Activated naive CD4-positive, alpha-beta T cell treated with anti-CD3 and anti-CD28 coated beads for 36 hours (primary cell): ENCODE measurements at regions of chr10 and their contacts with region 1.

Region 1: DNA sequence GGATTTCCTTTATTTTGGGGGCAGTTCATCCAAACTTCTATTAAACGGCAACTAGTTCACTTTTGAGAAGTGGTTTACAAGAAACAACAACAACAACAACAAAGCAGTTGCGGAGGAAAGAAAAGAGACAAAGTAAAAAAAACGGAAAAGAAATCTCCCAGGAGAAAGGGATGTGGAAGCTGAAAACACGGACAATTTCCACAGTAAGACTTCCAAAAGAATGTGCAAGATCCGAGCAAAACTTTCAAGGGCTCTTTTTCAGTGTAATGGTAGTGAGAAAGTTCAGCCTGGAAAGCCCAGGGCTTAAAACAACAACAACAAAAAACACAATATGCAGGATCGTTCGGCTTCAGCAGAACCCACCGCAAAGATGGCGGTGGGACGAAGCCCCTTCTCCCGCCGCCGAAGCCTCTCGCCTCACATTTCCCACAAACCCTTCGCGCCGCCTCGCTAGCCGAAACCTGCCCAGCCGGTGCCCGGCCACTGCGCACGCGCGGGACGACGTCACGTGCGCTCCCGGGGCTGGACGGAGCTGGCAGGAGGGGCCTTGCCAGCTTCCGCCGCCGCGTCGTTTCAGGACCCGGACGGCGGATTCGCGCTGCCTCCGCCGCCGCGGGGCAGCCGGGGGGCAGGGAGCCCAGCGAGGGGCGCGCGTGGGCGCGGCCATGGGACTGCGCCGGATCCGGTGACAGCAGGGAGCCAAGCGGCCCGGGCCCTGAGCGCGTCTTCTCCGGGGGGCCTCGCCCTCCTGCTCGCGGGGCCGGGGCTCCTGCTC is at the start of gene TNKS2:
- DNase-seq: peak; percentile 94
- H3K4me3 Mint-ChIP-seq: peak within 1 kb of the TSS; percentile 98
- H3K27ac Mint-ChIP-seq: peak within 1 kb of the TSS; percentile 99
- H3K4me1 Mint-ChIP-seq: peaks cover 47% of the 10 kb centered on the region
- H3K27me3 Mint-ChIP-seq: no peaks in the 10 kb centered on the region
- total RNA-seq, gene TNKS2: 39.3 to 40.0 TPM

Region 2: GRCh38 chr10:91163269-91163868 is 634.7 kb before region 1 on chr10:
- CTCF ChIA-PET with region 1: no interaction called
- intact Hi-C with region 1: loop called (anchors 2 kb)
- DNase-seq: peak; percentile 75
- H3K4me3 Mint-ChIP-seq: peak overlapping the region; percentile 80
- H3K27ac Mint-ChIP-seq: peak overlapping the region; percentile 78
- H3K4me1 Mint-ChIP-seq: peaks cover 33% of the 10 kb centered on the region
- H3K27me3 Mint-ChIP-seq: no peaks in the 10 kb centered on the region

Region 3: DNA sequence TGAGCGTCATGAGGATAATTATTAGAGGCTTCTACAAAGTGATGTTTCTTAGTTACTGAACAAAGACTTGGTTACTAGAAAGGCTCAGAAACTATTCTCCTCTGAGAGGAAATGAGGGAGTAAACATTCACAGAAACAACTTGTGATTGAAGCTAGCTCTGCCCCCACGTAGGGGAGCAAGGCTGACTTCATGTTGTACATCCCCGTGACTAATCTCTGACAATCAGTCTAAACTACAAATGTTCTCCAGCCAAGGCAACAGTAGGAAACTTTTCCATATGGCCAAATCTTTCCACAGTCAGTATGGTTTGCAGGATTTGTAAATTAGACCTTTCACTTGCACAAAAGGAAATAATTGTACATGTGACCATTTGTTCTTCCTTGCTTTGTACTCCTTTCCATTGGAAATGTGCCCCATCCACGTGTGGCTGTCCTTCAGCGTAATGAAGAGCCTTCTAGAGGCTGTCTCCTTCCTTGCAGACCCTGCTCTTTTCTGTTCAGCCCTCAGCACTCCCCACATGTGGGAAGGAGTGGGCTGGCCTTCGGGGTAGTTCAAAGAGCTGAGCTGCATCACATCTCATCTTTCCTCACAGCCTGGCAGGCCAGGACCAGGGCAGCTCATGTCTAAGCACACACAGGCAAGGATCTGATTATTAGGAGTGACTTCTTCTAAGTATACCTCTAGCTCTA is 484.1 kb before region 1 on chr10:
- CTCF ChIA-PET with region 1: no interaction called
- intact Hi-C with region 1: loop called (anchors 2 kb)
- DNase-seq: peak; percentile 50
- H3K4me3 Mint-ChIP-seq: no peak overlapping the region
- H3K27ac Mint-ChIP-seq: peak overlapping the region; percentile 82
- H3K4me1 Mint-ChIP-seq: peaks cover 11% of the 10 kb centered on the region
- H3K27me3 Mint-ChIP-seq: peaks cover 4% of the 10 kb centered on the region

Region 4: GRCh38 chr10:91901784-91902677 is 104.0 kb after region 1 on chr10:
- CTCF ChIA-PET with region 1: no interaction called
- intact Hi-C with region 1: loop called (anchors 1 kb)
- DNase-seq: peak; percentile 85
- H3K4me3 Mint-ChIP-seq: no peak overlapping the region
- H3K27ac Mint-ChIP-seq: peak overlapping the region; percentile 79
- H3K4me1 Mint-ChIP-seq: peaks cover 23% of the 10 kb centered on the region
- H3K27me3 Mint-ChIP-seq: no peaks in the 10 kb centered on the region

Region 5: DNA sequence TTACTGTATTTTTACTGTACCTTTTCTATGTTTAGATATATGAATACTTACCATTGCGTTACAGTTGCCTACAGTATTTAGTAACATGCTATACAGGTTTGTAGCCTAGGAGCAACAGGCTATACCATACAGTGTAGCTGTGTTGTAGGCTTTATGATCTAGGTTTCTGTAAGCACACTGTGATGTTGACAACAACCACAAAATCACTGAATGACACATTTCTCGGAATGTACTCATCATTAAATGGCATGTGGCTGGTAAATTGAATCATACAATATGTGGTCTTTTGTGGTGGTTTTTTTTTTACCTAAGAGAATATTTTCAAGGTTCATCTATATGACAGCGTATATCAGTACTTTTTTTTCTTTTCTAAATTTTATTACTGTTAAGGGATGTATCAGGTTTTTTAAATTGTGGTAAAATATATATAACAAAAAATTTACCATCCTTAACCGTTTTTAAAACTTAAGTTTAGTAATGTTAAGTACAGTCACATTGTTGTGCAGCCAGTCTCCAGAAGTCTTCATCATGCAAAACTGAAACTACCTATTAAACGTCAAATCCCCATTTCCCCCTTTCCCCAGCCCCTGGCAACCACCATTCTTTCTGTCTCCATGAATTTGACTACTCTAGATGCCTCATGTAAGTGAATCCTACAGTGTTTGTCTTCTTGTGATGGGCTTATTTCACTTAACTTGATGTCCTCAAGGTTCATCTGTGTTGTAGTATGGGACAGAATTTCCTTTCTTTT is 147.0 kb after region 1 on chr10:
- CTCF ChIA-PET with region 1: no interaction called
- intact Hi-C with region 1: loop called (anchors 1 kb)
- DNase-seq: peak; percentile 34
- H3K4me3 Mint-ChIP-seq: no peak overlapping the region
- H3K27ac Mint-ChIP-seq: no peak overlapping the region
- H3K4me1 Mint-ChIP-seq: peaks cover 18% of the 10 kb centered on the region
- H3K27me3 Mint-ChIP-seq: no peaks in the 10 kb centered on the region

Region 6: GRCh38 chr10:92290837-92291615 is 493.0 kb after region 1 on chr10 and contains the starts of genes CPEB3 and MARCHF5:
- CTCF ChIA-PET with region 1: no interaction called
- intact Hi-C with region 1: loop called (anchors 1 kb)
- DNase-seq: peak; percentile 95
- H3K4me3 Mint-ChIP-seq: peak within 1 kb of the TSS; percentile 81
- H3K27ac Mint-ChIP-seq: peak within 1 kb of the TSS; percentile 77
- H3K4me1 Mint-ChIP-seq: peaks cover 25% of the 10 kb centered on the region
- H3K27me3 Mint-ChIP-seq: no peaks in the 10 kb centered on the region
- total RNA-seq, gene CPEB3: 1.0 to 1.3 TPM
- total RNA-seq, gene MARCHF5: 26.1 to 28.1 TPM

Region 7: GRCh38 chr10:92848441-92849233 is 1050.6 kb after region 1 on chr10 and contains the start of gene EXOC6:
- CTCF ChIA-PET with region 1: no interaction called
- intact Hi-C with region 1: loop called (anchors 10 kb)
- DNase-seq: peak; percentile 86
- H3K4me3 Mint-ChIP-seq: peak within 1 kb of the TSS; percentile 88
- H3K27ac Mint-ChIP-seq: peak within 1 kb of the TSS; percentile 61
- H3K4me1 Mint-ChIP-seq: peaks cover 24% of the 10 kb centered on the region
- H3K27me3 Mint-ChIP-seq: no peaks in the 10 kb centered on the region
- total RNA-seq, gene EXOC6: 7.6 to 9.3 TPM